ENCODE measurements at regions of chr3 and their contacts with region 1.

Region 1: GRCh38 chr3:110938631-110939030 is 133.0 kb upstream of the NECTIN3 start:
- DNase-seq: no peak
- H3K4me3 ChIP-seq: no peak overlapping the region
- H3K27ac ChIP-seq: no peak overlapping the region
- H3K4me1 ChIP-seq: no peaks in the 10 kb centered on the region
- H3K27me3 ChIP-seq: no peaks in the 10 kb centered on the region
- CTCF ChIP-seq: no peak
- POLR2A ChIP-seq: no peak

Region 2: GRCh38 chr3:110680450-110680849 is 258.2 kb before region 1 on chr3:
- intact Hi-C with region 1: loop called (anchors 5 kb)
- DNase-seq: no peak
- H3K4me3 ChIP-seq: no peak overlapping the region
- H3K27ac ChIP-seq: no peak overlapping the region
- H3K4me1 ChIP-seq: no peaks in the 10 kb centered on the region
- H3K27me3 ChIP-seq: no peaks in the 10 kb centered on the region
- CTCF ChIP-seq: no peak
- POLR2A ChIP-seq: no peak